Gastrocnemius medialis (tissue), 4 donors: ENCODE measurements at regions of chr17 and their contacts with region 1.

Region 1: DNA sequence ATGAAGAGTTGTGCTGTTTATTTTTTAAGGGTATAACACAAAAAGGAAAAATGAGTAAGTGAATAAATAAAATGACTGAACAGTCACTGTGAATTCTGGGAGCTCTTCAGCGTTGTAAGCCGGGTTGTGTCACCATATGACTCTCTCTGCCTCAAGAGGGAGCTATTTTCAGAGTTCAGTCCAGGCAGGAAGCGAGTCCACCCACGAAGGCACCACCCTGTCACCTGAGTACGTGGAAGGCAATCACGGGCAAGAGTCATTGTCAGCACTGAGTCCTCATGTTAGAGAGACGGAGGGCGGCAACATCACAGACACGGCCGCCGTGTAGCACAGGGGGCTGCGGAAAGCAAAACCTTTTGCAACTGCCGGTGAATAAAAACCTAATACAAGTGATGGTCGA is 227.6 kb downstream of the UTP18 start:
- DNase-seq: no peak
- ATAC-seq: no peak
- H3K4me3 ChIP-seq: no peak overlapping the region
- H3K27ac ChIP-seq: no peak overlapping the region
- H3K4me1 ChIP-seq: no peaks in the 10 kb centered on the region
- H3K27me3 ChIP-seq: no peaks in the 10 kb centered on the region
- CTCF ChIP-seq: no peak
- POLR2A ChIP-seq: no peak

Region 2: GRCh38 chr17:51397361-51398127 is 90.4 kb before region 1 on chr17:
- in situ Hi-C with region 1: loop called in 1 of 4 experiments (anchors 25 kb)
- intact Hi-C with region 1: no loop called
- DNase-seq: no peak
- ATAC-seq: no peak
- H3K4me3 ChIP-seq: no peak overlapping the region
- H3K27ac ChIP-seq: no peak overlapping the region
- H3K4me1 ChIP-seq: no peaks in the 10 kb centered on the region
- H3K27me3 ChIP-seq: no peaks in the 10 kb centered on the region
- CTCF ChIP-seq: no peak
- POLR2A ChIP-seq: no peak